ENCODE measurements at regions of chr6 and their contacts with region 1.

Region 1: DNA sequence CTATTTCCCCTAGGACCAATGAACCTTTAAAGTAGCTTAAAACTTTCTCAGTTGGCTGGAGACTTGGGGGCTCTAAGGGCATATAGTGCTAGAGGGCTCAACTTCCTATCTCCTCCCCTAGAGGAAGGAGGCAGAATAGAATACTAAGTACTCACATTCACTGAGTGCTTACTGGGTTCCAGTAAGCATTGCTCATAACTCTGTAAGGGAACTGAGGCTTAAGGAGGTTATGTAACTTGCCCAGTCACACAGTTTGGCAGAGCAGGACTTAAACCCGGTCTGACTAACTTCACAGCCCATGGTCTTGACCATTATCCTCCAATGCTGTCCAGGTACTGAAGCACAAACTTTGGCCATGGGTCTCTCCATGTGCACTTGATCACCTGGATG is 12.5 kb downstream of the SESN1 start:
- DNase-seq: no peak
- ATAC-seq: peak in 3 of 4 donors; percentile 5 to 60 (median 44)
- H3K4me3 ChIP-seq: no peak overlapping the region
- H3K27ac ChIP-seq: peak overlapping the region in 11 of 12 donors; percentile 50 to 88 (median 81)
- H3K4me1 ChIP-seq: peaks cover 0 to 79% (median 40%) of the 10 kb centered on the region in 12 donors
- H3K27me3 ChIP-seq: no peaks in the 10 kb centered on the region
- CTCF ChIP-seq: peak in 1 of 12 donors; percentile 18
- POLR2A ChIP-seq: no peak

Region 2: DNA sequence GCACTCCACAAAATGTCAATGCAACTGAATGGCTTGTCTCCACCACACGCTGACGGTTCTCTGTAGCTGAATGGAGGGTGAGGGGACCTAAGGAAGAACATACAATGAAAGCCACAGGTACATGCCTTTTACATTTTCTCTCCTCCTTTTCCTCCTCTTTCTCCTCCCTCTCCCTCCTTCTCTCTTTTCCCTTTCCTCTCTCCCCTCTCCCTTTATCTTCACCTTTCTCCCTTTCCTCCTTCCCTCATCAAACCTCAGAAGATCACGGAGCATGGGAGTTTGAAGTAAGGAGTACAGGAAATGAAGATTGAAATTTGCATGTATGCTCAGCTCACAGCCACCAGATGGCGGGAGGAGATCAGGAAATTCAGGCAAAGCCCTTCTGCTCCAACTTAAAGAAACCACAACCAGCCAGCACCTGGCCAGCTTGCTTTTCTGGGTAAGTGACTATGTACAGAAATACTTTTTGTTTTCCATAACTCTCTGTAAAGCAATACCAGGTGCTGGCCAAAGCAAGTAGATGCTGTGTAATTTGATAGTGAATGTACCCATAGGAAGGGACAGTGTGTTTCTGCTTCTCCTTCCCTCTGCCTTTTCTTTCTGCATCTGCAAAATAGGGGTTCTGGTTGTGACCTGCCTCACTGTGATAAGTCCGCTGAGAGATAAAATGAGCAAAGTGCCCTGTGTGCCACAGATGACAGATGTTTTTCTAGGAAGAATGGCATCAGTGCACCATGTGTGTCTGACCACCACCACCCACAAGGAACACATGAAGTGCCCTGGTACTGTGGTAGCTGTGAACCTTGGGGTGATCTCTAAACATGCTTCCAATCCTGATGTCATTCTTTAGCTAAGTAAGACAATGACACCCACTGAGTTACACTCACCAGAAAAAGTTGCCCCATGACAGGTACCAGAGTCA is 540.1 kb before region 1 on chr6:
- intact Hi-C with region 1: loop called in 1 of 10 experiments (anchors 5 kb)
- DNase-seq: peak; percentile 61 to 76 (median 70)
- ATAC-seq: peak; percentile 54 to 86 (median 80)
- H3K4me3 ChIP-seq: no peak overlapping the region
- H3K27ac ChIP-seq: no peak overlapping the region
- H3K4me1 ChIP-seq: peaks cover 0 to 14% (median 0%) of the 10 kb centered on the region in 12 donors
- H3K27me3 ChIP-seq: no peaks in the 10 kb centered on the region
- CTCF ChIP-seq: peak; percentile 68 to 92 (median 89)
- POLR2A ChIP-seq: no peak

Region 3: DNA sequence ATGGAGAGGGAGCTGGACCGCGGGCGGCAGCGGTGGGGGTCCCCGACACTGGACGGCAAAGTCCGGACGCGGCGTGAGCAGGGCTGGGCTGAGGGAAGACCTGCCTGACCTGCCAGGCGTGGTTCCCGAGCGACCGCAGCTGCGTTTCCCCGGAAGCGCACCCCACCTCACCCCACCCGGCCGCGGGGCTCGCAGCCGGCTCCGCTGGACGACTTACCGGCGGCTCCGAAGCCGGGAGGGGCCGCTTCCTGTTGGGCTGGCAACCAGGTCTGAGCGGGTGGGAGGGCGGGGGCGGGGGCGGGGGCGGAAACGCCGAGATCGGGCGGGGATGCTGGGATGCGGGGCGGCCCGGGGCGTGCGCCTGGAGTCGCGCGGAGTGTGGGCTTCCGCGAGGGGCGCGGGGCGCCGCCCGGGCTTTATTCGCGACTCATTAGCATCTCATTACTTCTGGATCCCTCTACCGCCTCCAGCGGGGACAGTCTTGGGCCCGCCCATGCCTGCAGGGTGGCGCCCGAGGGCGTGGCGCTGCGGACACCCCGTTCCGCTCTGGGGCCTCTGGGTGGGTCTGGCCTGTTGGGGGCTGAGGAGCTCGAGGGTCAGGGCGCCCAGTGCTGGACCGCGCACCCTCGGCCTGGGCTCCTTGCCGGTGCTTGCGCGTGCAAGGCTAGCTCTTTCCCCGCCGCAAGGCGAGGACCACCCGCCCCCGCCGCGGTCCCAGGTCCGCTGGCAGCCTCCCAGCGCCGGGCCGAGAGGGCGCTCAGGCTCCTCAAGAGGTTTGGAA is 373.5 kb after region 1 on chr6 and contains the start of gene MICAL1:
- intact Hi-C with region 1: no loop called
- DNase-seq: peak; percentile 63 to 86 (median 77)
- ATAC-seq: peak; percentile 61 to 83 (median 72)
- H3K4me3 ChIP-seq: peak within 1 kb of the TSS; percentile 57 to 93 (median 76)
- H3K27ac ChIP-seq: peak within 1 kb of the TSS; percentile 35 to 94 (median 74)
- H3K4me1 ChIP-seq: peaks cover 0 to 53% (median 26%) of the 10 kb centered on the region in 12 donors
- H3K27me3 ChIP-seq: no peaks in the 10 kb centered on the region
- CTCF ChIP-seq: peak in 9 of 12 donors; percentile 14 to 53 (median 36)
- POLR2A ChIP-seq: peak in 1 of 2 donors; percentile 37
- total RNA-seq, gene MICAL1: 4.5 to 21.9 (median 5.5) TPM

Measured in heart left ventricle (tissue), 16 donors.